Activated CD4-positive, alpha-beta T cell treated with anti-CD3 and anti-CD28 coated beads for 36 hours (primary cell): ENCODE measurements at regions of chr19 and their contacts with region 1.

Region 1: DNA sequence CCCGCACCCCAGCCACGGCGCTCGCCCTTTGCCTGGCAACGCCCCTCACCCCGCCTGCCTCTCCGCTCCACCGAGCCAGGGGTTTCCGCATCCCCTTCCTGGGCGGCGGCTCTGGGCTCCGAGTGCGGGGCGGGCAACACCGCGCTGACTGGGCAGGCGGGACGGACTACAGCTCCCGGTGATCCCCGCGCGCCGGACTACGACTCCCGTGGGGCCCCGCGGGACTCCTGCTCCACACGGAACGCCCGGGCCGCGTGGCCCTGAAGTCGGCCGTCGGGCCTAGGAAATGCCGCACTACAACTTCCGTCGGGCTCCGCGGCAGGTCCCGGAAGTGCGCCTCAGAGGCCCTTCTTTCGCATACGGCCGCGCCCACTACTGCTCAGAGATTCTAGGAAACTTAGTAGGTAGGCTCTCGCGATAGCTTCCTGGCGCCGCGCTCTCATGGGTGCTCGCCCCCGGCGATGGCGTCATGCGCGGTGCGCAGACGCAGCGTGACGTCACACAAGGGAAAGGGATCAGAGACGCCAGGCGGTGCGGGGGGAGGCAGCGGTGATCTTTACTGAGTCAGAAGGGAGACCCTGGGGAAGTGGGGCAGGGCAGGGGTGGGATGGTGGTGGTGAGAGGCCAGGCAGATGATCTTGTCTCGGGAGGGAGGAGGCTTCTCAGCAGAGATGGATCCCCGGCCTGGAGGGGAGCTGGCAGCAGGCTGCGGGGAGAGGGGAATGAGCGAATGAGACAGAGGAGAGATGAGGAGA is at the start of gene JOSD2:
- DNase-seq: peak; percentile 99
- ATAC-seq: peak; percentile 97
- H3K4me3 Mint-ChIP-seq: peak within 1 kb of the TSS; percentile 84
- H3K27ac Mint-ChIP-seq: peak within 1 kb of the TSS; percentile 92
- H3K4me1 Mint-ChIP-seq: peaks cover 14% of the 10 kb centered on the region
- H3K27me3 Mint-ChIP-seq: peaks cover 5% of the 10 kb centered on the region
- total RNA-seq, gene JOSD2: 17.4 to 28.1 TPM

Region 2: GRCh38 chr19:50329146-50329925 is 181.9 kb before region 1 on chr19 and contains the start of gene KCNC3:
- CTCF ChIA-PET with region 1: no interaction called
- POLR2A ChIA-PET with region 1: no interaction called
- intact Hi-C with region 1: loop called in 1 of 2 experiments (anchors 1 kb)
- DNase-seq: peak; percentile 99
- ATAC-seq: peak; percentile 67
- H3K4me3 Mint-ChIP-seq: peak within 1 kb of the TSS; percentile 75
- H3K27ac Mint-ChIP-seq: peak within 1 kb of the TSS; percentile 86
- H3K4me1 Mint-ChIP-seq: peaks cover 59% of the 10 kb centered on the region
- H3K27me3 Mint-ChIP-seq: peaks cover 33% of the 10 kb centered on the region
- total RNA-seq, gene KCNC3: 9.1 to 9.7 TPM

Region 3: GRCh38 chr19:50376166-50377050 is 134.8 kb before region 1 on chr19 and contains the start of gene NR1H2:
- CTCF ChIA-PET with region 1: no interaction called
- POLR2A ChIA-PET with region 1: interaction called, 5 read pairs
- intact Hi-C with region 1: loop called (anchors 1 kb)
- DNase-seq: peak; percentile 97
- ATAC-seq: peak; percentile 89
- H3K4me3 Mint-ChIP-seq: peak within 1 kb of the TSS; percentile 89
- H3K27ac Mint-ChIP-seq: peak within 1 kb of the TSS; percentile 97
- H3K4me1 Mint-ChIP-seq: peaks cover 21% of the 10 kb centered on the region
- H3K27me3 Mint-ChIP-seq: no peaks in the 10 kb centered on the region
- total RNA-seq, gene NR1H2: 50.3 to 53.6 TPM

Region 4: GRCh38 chr19:50431343-50432220 is 79.7 kb before region 1 on chr19:
- CTCF ChIA-PET with region 1: no interaction called
- POLR2A ChIA-PET with region 1: no interaction called
- intact Hi-C with region 1: loop called in 1 of 2 experiments (anchors 1 kb)
- DNase-seq: peak; percentile 92
- ATAC-seq: peak; percentile 95
- H3K4me3 Mint-ChIP-seq: peak overlapping the region; percentile 72
- H3K27ac Mint-ChIP-seq: peak overlapping the region; percentile 93
- H3K4me1 Mint-ChIP-seq: peaks cover 15% of the 10 kb centered on the region
- H3K27me3 Mint-ChIP-seq: peaks cover 6% of the 10 kb centered on the region

Region 5: DNA sequence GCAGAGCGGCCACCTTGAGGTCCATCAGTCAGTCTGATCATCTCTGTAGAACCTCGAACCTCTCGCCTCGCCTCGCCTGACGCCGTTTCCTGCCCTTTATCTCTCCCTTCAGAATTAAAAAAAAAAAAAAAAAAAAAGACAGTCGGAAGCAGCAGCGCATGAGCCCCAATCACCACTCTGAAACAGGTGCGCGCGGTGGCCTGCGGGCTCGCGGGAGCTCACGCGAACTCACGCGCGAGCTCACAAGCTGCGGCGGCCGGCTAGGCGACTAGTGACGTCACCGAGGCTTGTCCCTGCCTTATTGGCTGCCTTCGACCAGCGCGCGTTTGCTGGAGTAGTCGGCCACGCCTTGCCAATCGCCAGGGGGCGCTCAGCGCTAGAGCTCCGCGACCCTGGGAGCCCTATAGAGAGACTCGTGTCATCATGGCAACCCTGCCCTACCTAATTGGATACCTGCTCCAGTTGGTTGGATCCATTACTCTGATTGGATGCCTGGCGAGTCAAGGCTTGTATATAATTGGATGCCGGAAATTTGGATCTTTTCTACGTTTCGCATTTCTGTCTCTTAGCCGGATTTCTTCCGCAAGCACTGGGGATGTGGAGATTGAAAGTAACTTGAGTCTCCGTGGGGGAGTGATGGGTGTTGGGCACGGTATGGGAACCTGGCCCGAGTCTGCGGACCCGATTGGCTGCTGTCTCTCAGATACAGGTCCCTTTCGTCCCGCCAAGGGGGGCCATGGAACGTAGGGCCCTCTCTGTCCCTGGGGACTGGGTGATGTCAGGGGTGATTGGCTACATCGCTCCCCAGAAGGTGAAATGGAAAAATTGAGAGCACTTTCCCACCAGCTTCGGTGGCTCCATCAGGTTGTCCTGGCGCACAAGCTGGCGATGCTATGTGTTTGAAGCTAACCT is 96.9 kb after region 1 on chr19:
- CTCF ChIA-PET with region 1: no interaction called
- POLR2A ChIA-PET with region 1: no interaction called
- intact Hi-C with region 1: loop called in 1 of 2 experiments (anchors 1 kb)
- DNase-seq: peak; percentile 95
- ATAC-seq: peak; percentile 93
- H3K4me3 Mint-ChIP-seq: peak overlapping the region; percentile 5
- H3K27ac Mint-ChIP-seq: no peak overlapping the region
- H3K4me1 Mint-ChIP-seq: peaks cover 13% of the 10 kb centered on the region
- H3K27me3 Mint-ChIP-seq: peaks cover 35% of the 10 kb centered on the region

Region 6: DNA sequence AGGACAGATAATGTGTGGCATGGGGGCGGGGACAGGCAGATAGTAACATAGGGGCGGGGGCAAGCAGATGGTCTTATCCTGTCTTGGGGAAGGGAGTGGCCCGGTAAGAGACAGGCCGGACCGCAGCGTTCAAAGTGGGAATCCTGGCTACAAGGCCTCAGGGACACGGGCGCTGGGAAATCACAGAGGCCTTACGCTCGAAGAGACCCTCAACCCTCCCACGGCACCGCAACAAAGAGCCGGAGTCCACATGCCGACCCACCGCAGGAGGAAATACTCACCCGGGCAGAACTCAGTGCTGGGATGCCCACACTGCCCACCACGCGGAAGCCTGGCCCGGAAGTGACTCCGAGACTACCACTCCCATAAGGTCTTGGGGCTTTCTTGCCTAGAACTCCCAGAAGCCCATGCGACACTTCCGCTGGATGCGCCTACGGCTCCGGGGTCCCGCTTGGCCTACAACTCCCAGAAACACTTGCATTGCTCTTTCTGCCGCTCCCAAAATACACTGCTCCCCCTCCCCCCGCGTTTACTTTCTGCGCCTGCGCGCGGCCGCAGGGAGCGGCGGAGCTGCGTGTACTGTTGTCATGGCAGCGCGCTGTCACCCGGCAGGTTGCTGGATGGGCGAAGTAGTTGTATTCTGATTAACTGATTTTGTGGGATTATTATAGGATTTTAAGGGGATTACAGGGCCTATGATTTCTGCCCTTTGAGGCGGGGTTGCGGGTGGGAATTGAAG is 597.0 kb after region 1 on chr19 and contains the start of gene CTU1:
- CTCF ChIA-PET with region 1: no interaction called
- POLR2A ChIA-PET with region 1: no interaction called
- intact Hi-C with region 1: loop called in 1 of 2 experiments (anchors 1 kb)
- DNase-seq: peak; percentile 99
- ATAC-seq: peak; percentile 98
- H3K4me3 Mint-ChIP-seq: peak within 1 kb of the TSS; percentile 92
- H3K27ac Mint-ChIP-seq: peak within 1 kb of the TSS; percentile 91
- H3K4me1 Mint-ChIP-seq: peaks cover 36% of the 10 kb centered on the region
- H3K27me3 Mint-ChIP-seq: no peaks in the 10 kb centered on the region
- total RNA-seq, gene CTU1: 7.2 to 9.1 TPM